RWPE1 (cell line): ENCODE measurements at regions of chr1 and their contacts with region 1.

Region 1: DNA sequence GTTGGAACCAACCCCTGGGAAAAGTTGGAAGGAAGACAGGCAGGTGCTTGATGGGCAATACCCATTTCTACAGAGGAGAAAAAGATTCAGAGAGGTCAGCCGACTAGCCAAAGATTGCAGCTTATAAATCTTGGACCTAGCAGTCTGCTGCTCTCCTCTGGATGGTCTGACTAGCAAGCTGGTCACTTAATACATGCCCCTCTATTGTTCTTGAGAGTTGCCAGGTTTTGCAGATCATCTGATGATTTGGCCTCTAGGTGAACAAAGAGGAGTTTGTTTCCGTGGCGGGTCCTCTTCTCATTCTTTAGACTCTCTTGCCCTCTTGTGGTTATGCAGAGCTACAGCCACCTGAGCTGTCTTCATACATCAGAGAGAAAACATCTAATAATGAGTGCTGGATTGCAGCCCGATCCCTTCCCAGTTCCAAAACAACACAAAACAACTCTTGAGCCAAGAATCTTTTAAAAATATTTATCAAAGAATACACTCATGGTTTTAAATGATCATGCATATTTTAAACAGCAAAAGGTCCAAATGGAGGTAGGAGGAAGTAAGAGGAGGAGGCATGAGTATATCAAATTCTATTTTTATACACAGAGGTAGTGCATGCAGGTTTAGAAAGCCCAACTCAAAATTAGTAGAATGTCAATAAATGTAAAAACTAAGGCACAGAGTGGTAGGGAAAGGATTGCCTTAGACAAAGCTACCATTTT is 115.7 kb downstream of the SLC30A10 start:
- DNase-seq: peak; percentile 94
- H3K27ac ChIP-seq: no peak overlapping the region
- CTCF ChIP-seq: peak; percentile 83

Region 2: DNA sequence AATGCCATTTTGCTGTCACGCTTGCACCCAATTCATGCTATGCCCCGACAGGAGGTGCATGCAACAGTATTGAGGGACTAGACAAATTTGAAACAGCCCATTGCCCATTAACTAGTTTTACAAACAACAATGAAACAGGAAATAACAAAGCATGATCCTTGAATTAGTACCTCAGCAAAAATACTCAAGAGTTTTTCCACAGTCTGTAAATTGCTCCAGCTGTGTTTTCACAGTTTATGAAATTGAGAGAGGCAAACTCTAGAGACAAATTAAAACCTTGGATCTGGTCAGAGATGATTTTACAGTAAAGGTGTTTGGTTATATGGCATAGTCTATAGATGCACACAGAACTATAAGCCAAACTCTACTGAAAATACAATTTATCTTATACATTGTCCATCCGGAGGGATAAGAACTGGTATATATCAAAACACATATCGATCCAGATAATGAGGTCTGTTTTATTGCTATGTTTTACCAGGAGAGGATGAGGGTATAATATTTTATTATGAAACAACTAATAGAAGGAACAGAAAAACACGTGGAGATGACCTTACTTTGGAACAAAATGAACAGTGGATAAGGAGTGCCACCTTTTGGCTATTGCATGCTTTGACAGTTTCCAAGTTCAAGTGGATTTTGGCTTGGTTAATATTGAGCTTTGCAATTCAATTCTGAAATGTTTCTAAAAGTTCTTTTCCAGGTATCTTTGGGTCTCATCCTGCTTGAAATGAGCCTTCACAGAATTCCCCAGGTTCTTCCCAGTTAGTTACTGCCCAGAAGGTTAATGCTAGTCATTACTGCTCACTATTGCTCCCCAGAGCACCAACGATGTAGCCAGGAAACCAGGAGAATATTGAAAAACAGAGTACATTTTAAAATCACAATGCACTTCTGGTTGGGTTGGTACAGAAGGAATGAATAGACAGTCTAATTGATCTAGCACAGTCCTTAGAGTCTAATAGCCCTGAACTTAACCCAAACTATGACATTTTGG is 245.4 kb before region 1 on chr1:
- CTCF ChIA-PET with region 1: interaction called, 10 read pairs
- POLR2A ChIA-PET with region 1: no interaction called
- DNase-seq: peak; percentile 32
- H3K27ac ChIP-seq: no peak overlapping the region
- CTCF ChIP-seq: peak; percentile 30

Region 3: DNA sequence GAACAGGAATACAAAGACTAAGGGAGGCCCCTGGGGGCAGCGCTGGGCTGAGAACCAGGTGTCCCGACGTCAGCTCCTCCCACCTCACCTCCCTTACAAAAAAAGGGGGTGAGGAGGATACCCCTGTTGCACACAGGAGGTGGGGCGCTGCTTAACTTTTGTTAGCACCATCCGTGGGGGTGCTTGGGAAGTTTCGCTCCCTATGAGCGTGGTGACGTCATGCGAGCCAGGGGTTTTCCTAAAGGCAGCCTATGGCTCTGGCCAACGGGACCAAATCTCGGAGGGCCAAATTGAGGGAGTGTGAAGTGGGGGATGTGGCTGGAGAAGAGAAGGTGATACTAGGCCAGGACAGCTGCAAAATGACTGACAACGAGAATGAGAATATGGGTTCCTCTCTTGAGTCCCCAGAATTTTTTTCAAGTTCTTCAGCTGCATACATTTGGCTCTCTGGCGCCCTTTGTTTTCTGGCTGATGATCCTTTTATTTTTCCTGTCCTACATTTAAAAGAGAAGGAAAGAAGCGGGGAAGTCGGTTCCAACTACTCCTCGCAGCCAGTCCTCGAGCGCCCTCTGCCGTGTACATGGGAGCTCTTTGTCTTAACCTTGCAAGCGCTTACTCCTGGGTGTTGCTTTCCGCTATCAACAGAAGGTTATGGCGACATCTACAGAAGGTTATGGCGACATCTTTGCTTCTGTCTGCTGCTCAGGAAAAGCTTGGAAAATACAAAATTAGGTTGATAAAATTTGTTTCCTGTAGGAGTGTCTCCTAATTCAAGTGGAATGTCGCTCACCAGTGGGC is 151.8 kb before region 1 on chr1:
- CTCF ChIA-PET with region 1: interaction called, 25 read pairs
- POLR2A ChIA-PET with region 1: no interaction called
- DNase-seq: peak; percentile 82
- H3K27ac ChIP-seq: no peak overlapping the region
- CTCF ChIP-seq: peak; percentile 87

Region 4: GRCh38 chr1:219666242-219666641 is 146.4 kb before region 1 on chr1:
- CTCF ChIA-PET with region 1: interaction called, 25 read pairs
- POLR2A ChIA-PET with region 1: no interaction called
- DNase-seq: no peak
- H3K27ac ChIP-seq: no peak overlapping the region
- CTCF ChIP-seq: no peak